ENCODE measurements at regions of chr3 and their contacts with region 1.

Region 1: GRCh38 chr3:146469150-146470017 is at the start of gene PLSCR2:
- DNase-seq: peak; percentile 85
- H3K4me3 ChIP-seq: peak within 1 kb of the TSS; percentile 54 to 66 (median 59)
- H3K27ac ChIP-seq: peak within 1 kb of the TSS; percentile 36 to 76 (median 64)
- H3K4me1 ChIP-seq: peaks cover 0 to 15% (median 6%) of the 10 kb centered on the region in 4 donors
- H3K27me3 ChIP-seq: no peaks in the 10 kb centered on the region
- CTCF ChIP-seq: no peak
- EP300 ChIP-seq: no peak
- POLR2A ChIP-seq: no peak
- total RNA-seq, gene PLSCR2: not detected

Region 2: DNA sequence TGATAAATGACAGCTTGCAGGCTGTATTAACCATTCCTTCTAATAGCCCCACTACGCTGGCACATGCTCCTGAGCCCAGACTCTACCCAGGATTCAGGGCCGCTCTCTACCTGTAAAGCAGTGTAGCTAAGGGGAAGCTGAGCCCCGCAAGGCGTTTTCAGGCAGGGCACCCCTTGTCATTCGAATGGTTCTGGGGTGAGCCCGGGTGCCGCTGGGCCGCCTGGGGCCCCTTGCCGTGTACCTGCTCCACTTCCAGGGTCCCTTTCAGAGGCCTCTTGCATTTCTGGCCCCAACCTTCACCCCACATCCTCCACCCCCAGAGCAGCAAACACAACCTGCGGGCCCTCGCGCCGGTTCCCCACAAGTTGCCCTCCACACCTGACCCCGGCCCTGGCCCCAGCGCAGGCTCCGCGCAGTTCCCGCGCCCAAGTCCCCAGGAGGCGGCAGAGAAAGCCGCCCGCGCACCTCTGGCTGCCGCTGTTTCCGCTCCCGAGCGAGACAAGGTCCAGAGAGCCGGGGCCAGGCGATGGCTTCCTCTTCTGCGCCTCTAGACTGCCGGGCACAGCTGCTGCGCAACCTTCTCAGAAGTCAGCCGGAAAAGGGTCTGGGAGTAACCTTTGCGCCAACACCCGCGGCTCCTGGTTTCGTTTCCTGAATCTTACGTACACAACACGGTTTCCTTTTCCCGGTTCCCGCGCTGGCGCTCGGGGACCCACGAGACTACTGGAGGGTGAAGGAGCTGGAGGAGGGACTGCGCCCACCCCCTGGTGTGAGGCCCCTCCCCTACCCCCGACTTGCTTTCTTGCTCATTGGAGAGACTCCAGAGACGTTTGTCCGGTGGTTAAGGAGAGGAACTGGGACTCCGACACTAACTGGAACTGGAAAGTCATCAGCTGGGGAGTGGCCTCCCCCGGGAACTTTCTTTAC is 74.9 kb after region 1 on chr3 and contains the start of gene PLSCR1:
- intact Hi-C with region 1: loop called (anchors 5 kb)
- DNase-seq: peak; percentile 98
- H3K4me3 ChIP-seq: peak within 1 kb of the TSS; percentile 64 to 92 (median 85)
- H3K27ac ChIP-seq: peak within 1 kb of the TSS; percentile 89 to 98 (median 95)
- H3K4me1 ChIP-seq: peaks cover 0 to 39% (median 33%) of the 10 kb centered on the region in 4 donors
- H3K27me3 ChIP-seq: no peaks in the 10 kb centered on the region
- CTCF ChIP-seq: no peak
- EP300 ChIP-seq: peak in 3 of 4 donors; percentile 22 to 82 (median 81)
- POLR2A ChIP-seq: peak; percentile 75 to 87
- total RNA-seq, gene PLSCR1: 59.3 to 194 (median 101) TPM

Region 3: DNA sequence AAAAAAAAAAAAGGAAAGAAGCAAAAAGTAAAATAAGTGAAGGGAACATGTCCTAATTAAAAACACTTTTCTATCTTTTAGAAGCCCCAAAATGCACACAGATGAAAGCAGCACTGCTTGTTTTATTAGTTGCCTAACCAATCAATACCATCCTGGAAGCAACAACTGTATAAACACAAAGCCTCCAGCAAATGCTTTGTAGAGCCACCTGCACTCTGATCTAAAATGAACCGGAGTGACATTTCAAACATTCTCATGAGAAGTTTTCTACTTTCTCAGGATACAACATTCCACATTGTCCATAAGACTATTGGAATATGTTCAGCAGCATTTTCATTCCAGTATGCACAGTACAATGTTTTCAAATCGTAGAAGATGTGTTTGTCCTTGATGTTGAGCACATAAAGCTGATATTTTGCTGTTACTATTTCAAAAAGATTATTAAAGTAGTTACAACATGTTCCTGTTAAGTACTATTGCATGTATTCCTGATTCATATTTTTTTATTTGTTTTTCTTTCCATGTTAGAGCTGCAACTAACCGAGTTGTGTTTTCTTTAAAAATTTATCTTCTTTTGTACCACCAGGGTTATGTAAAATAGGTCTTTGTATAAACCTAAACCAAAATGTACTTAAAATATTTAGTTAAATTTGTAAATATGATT is 186.1 kb after region 1 on chr3:
- intact Hi-C with region 1: no loop called
- DNase-seq: no peak
- H3K4me3 ChIP-seq: no peak overlapping the region
- H3K27ac ChIP-seq: no peak overlapping the region
- H3K4me1 ChIP-seq: no peaks in the 10 kb centered on the region
- H3K27me3 ChIP-seq: no peaks in the 10 kb centered on the region
- CTCF ChIP-seq: no peak
- EP300 ChIP-seq: no peak
- POLR2A ChIP-seq: no peak

Measured in sigmoid colon (tissue), 7 donors.